ENCODE measurements at regions of chr22 and their contacts with region 1.

Region 1: GRCh38 chr22:45163451-45164269 is at the start of gene NUP50:
- DNase-seq: peak; percentile 96
- H3K4me3 ChIP-seq: peak within 1 kb of the TSS; percentile 78 to 96 (median 91)
- H3K27ac ChIP-seq: peak within 1 kb of the TSS; percentile 98
- H3K4me1 ChIP-seq: peaks cover 30% of the 10 kb centered on the region
- H3K27me3 ChIP-seq: no peaks in the 10 kb centered on the region
- CTCF ChIP-seq: peak in 1 of 2 donors; percentile 18
- total RNA-seq, gene NUP50: 33.7 to 81.5 TPM

Region 2: GRCh38 chr22:44975427-44976262 is 188.0 kb before region 1 on chr22:
- CTCF ChIA-PET with region 1: no interaction called
- dilution Hi-C with region 1: no loop called
- in situ Hi-C with region 1: no loop called
- intact Hi-C with region 1: loop called (anchors 5 kb)
- DNase-seq: peak; percentile 68
- H3K4me3 ChIP-seq: no peak overlapping the region
- H3K27ac ChIP-seq: no peak overlapping the region
- H3K4me1 ChIP-seq: no peaks in the 10 kb centered on the region
- H3K27me3 ChIP-seq: peaks cover 3% of the 10 kb centered on the region
- CTCF ChIP-seq: peak; percentile 62 to 85

Region 3: DNA sequence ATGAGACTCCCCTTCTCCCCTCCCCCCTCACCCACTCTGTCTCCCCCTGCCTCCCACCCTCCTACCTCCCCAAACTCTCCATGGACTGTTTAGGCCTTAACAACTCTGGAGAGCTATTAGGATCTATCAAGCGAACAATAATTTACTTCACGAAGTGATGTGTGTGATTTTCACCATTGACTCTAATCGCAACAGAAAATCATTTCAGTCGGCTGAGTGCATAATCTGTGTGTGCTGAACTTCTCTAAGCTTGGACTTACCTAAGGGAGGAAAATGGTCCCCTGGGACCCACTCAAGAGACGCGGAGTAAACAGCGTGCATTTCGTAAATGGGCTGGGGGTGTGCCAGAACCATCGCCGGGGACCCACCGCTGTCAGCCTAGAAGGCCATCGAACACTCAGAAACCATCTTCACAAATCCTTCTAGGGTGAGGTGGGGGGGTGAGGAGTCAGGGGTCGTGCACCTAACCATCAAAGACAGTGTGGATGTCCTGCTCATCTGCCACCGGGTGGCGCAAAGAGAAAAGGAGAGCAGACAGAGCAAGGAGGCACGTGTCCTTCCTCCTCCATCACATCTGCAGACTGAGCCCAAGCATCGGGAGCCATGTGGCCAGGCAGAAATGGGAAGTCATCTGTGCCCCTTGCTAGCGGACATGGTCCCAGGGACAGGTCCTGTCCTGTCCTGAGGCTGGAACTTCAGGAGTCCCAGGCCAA is 62.0 kb before region 1 on chr22:
- CTCF ChIA-PET with region 1: no interaction called
- dilution Hi-C with region 1: no loop called
- in situ Hi-C with region 1: loop called in 1 of 2 experiments (anchors 5 kb)
- intact Hi-C with region 1: loop called (anchors 1 kb)
- DNase-seq: peak; percentile 15
- H3K4me3 ChIP-seq: no peak overlapping the region
- H3K27ac ChIP-seq: no peak overlapping the region
- H3K4me1 ChIP-seq: peaks cover 12% of the 10 kb centered on the region
- H3K27me3 ChIP-seq: no peaks in the 10 kb centered on the region
- CTCF ChIP-seq: peak; percentile 66 to 81

Region 4: DNA sequence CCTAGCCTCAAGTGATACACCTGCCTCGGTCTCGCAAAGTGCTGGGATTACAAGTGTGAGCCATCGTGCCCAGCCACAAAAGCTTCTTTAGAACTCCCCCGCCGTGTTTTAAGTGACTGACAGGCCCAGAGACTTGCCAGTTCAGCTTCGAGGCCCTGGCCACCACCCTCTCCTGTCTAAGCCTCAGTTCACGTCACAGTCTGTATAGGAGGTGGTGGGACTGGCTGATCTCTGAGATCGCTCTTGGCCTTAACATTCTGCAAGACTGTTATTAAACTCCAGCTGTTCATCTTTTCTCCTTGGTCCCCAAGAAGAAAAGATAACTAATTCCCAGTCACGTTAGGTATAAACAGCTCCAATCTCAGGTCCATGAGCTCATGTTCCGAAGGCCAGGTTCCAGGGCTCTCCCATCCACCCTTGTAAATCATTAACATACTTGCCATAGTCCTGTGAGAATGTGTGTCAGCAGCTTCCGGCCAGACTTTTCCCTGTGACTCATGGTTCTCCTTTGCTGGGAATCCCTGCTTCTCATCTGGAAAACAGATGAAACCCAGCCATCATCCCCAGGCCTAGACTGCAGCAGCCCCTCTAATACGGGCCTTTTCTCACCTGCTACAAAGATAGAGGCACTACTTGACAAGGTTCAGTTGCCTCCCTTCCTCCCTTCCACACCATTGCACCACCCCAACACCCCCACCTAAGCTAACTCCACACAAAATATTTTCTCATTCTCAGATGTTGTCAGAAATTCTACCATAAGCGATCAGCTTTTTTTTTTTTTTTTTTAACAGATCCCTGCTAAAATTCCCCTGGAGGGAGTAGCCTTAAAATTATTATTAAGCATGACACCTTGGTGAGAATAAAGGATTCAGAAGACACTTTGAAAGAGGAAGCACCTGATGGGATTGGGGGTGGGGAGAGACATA is 82.7 kb after region 1 on chr22:
- CTCF ChIA-PET with region 1: no interaction called
- dilution Hi-C with region 1: no loop called
- in situ Hi-C with region 1: no loop called
- intact Hi-C with region 1: loop called (anchors 2 kb)
- DNase-seq: peak; percentile 89
- H3K4me3 ChIP-seq: peak overlapping the region in 1 of 3 experiments; percentile 16
- H3K27ac ChIP-seq: peak overlapping the region; percentile 97
- H3K4me1 ChIP-seq: peaks cover 20% of the 10 kb centered on the region
- H3K27me3 ChIP-seq: no peaks in the 10 kb centered on the region
- CTCF ChIP-seq: no peak

Region 5: DNA sequence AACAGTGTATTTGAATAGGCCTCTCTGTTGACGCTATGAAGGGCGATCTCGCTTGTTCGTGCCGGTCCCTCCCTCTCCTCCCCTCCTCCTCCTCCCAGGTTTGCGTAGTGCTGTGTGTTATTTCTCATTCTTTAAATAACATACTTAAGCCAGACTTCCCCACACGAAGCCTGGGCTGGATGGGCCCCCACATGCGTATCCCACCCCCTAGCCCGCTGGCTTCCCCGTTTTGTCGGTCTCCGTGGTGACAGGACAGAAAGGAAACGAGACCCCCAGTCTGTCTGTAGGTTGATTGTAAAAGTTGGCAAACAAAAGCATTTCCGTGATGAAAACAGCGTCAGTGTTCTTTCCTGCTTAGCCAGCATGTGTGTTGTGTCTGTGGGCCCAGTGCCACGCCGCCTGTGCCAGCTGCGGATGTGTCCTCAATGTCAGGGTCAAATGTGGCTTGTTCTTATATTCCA is 173.3 kb after region 1 on chr22:
- CTCF ChIA-PET with region 1: no interaction called
- dilution Hi-C with region 1: no loop called
- in situ Hi-C with region 1: no loop called
- intact Hi-C with region 1: no loop called
- DNase-seq: no peak
- H3K4me3 ChIP-seq: no peak overlapping the region
- H3K27ac ChIP-seq: no peak overlapping the region
- H3K4me1 ChIP-seq: peaks cover 24% of the 10 kb centered on the region
- H3K27me3 ChIP-seq: no peaks in the 10 kb centered on the region
- CTCF ChIP-seq: no peak

Region 6: GRCh38 chr22:45502215-45503049 is 338.8 kb after region 1 on chr22 and contains the start of gene FBLN1:
- CTCF ChIA-PET with region 1: no interaction called
- dilution Hi-C with region 1: no loop called
- in situ Hi-C with region 1: no loop called
- intact Hi-C with region 1: no loop called
- DNase-seq: no peak
- H3K4me3 ChIP-seq: peak within 1 kb of the TSS; percentile 55 to 72 (median 69)
- H3K27ac ChIP-seq: peak within 1 kb of the TSS; percentile 22
- H3K4me1 ChIP-seq: peaks cover 22% of the 10 kb centered on the region
- H3K27me3 ChIP-seq: no peaks in the 10 kb centered on the region
- CTCF ChIP-seq: peak in 1 of 2 donors; percentile 38
- total RNA-seq, gene FBLN1: 130 to 173 TPM

Region 7: DNA sequence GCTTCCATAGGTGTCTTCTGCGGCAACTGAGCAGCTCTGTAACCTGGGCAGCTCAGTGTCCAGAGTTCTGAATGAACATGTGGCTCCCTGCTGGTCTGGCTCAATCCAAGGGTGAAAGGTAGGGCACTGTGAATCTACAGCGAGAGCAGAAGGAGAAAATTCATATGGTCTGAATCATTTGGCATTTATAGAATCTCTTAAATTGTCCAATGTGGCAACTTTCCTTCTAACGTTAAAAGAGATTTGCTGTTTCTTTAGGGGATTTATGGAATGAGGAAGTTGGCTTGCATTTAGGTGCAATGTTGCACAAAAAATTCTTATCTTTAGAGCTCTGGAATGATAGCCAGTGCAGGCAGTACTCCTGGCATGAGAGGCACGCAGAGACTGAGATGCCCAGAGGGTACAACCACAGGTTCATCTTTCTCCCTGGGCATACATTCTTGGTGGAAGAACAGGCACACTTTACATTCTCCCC is 525.0 kb after region 1 on chr22:
- CTCF ChIA-PET with region 1: no interaction called
- dilution Hi-C with region 1: no loop called
- in situ Hi-C with region 1: no loop called
- intact Hi-C with region 1: no loop called
- DNase-seq: peak; percentile 62
- H3K4me3 ChIP-seq: no peak overlapping the region
- H3K27ac ChIP-seq: peak overlapping the region; percentile 64
- H3K4me1 ChIP-seq: peaks cover 35% of the 10 kb centered on the region
- H3K27me3 ChIP-seq: no peaks in the 10 kb centered on the region
- CTCF ChIP-seq: no peak

Measured in mammary epithelial cell (primary cell).